ENCODE measurements at regions of chr1 and their contacts with region 1.

Region 1: DNA sequence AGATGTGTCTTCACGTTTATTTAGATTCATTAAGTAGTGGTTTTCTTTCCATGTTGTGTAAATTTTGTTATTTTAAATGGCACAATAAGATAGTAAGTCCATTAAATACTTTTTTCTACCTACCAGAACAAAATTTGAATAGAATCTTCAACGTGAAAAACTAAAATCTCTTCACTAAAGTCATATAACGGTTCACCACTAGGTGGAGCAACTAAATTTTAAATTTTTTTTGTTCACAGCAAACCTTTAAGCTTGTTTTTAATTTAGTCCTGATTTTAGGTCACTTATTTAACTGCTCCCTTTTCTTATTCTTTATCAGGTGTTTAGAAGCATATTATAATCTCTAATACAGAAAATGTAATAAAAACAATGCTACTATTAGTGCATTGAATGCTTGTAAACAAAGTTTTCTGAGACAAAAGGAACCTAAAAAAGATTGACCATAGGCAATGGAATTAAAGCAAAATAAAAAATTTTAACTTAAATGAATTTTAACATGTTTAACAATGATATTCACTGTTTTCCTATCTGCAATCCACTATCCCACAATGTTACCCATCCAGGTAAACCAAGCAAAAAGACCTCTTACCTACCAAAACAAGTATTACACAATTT is 28.3 kb upstream of the PKN2 start:
- DNase-seq: no peak
- H3K4me3 ChIP-seq: no peak overlapping the region
- H3K27ac ChIP-seq: no peak overlapping the region
- H3K4me1 ChIP-seq: no peaks in the 10 kb centered on the region
- H3K27me3 ChIP-seq: no peaks in the 10 kb centered on the region
- CTCF ChIP-seq: peak; percentile 36 to 50 (median 44)
- EP300 ChIP-seq: no peak
- POLR2A ChIP-seq: no peak

Region 2: GRCh38 chr1:88502886-88503285 is 152.9 kb before region 1 on chr1:
- intact Hi-C with region 1: no loop called
- DNase-seq: no peak
- H3K4me3 ChIP-seq: no peak overlapping the region
- H3K27ac ChIP-seq: no peak overlapping the region
- H3K4me1 ChIP-seq: no peaks in the 10 kb centered on the region
- H3K27me3 ChIP-seq: no peaks in the 10 kb centered on the region
- CTCF ChIP-seq: no peak
- EP300 ChIP-seq: no peak
- POLR2A ChIP-seq: no peak

Region 3: DNA sequence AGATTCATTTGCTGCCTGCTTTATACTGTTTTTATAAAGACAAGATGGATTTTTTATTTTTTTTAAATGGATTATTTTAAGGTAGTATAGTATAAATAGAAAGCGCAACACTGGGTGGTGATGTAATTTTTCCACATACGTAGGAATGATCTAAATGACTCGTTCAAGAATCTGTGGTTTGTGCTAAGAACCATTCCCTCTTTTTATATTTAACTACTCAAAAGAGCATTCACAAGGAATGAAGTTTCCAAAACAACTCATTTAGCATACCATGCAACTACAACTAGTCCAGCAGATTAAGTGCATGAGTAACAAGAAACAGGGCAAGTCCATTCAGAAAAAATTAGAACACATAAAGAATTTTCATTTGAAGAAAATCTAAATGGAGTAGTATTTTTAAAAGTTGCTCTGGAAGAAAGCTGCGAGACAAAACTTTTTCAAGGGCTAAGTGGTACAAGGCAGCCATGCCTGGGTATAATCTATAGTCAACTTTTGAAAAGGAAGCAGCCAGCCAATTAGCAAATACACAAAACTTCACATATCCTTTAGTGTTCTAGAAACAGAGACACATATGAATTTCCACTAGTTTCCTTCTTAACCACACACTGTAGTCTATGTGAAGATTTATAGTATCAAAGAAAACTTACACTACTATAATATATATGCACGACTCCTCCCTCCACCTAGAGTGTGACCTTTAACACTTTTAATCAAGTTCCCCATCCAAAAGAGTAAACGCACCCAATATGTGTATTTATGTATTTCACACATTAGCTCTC is 212.1 kb after region 1 on chr1:
- intact Hi-C with region 1: loop called in 2 of 4 experiments (anchors 10 kb)
- DNase-seq: no peak
- H3K4me3 ChIP-seq: no peak overlapping the region
- H3K27ac ChIP-seq: no peak overlapping the region
- H3K4me1 ChIP-seq: no peaks in the 10 kb centered on the region
- H3K27me3 ChIP-seq: no peaks in the 10 kb centered on the region
- CTCF ChIP-seq: no peak
- EP300 ChIP-seq: no peak
- POLR2A ChIP-seq: no peak

Region 4: GRCh38 chr1:88877382-88877825 is 221.6 kb after region 1 on chr1:
- intact Hi-C with region 1: loop called in 3 of 4 experiments (anchors 5 to 10 kb)
- DNase-seq: no peak
- H3K4me3 ChIP-seq: no peak overlapping the region
- H3K27ac ChIP-seq: no peak overlapping the region
- H3K4me1 ChIP-seq: no peaks in the 10 kb centered on the region
- H3K27me3 ChIP-seq: no peaks in the 10 kb centered on the region
- CTCF ChIP-seq: peak; percentile 19 to 28 (median 25)
- EP300 ChIP-seq: no peak
- POLR2A ChIP-seq: no peak